CD8-positive, alpha-beta T cell (primary cell): ENCODE measurements at regions of chr12 and their contacts with region 1.

Region 1: DNA sequence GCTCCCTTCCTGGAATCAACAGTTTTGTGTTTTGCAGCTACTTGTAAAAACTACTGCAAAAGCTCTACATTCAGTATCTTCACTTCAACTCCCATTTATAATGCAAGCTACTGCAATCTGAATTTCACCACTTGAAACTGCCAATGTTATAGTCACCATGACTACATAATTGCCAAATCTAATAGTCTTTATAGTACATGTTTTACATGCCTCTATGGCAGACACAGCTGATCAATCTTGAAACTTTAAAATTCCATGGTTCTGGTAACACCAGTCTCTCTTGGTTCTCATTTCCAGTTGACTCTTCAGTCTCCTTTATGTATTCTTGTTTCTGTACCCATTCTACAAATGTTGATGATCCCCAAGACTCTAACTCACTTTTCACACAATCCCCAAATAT is 185.9 kb downstream of the MED13L start:
- DNase-seq: no peak
- ATAC-seq: no peak
- H3K4me3 ChIP-seq: no peak overlapping the region
- H3K4me3 Mint-ChIP-seq: no peak overlapping the region
- H3K27ac ChIP-seq: no peak overlapping the region
- H3K27ac Mint-ChIP-seq: peak overlapping the region; percentile 5
- H3K4me1 ChIP-seq: peaks cover 9% of the 10 kb centered on the region
- H3K4me1 Mint-ChIP-seq: peaks cover 49% of the 10 kb centered on the region
- H3K27me3 ChIP-seq: no peaks in the 10 kb centered on the region
- H3K27me3 Mint-ChIP-seq: no peaks in the 10 kb centered on the region
- CTCF ChIP-seq: no peak

Region 2: DNA sequence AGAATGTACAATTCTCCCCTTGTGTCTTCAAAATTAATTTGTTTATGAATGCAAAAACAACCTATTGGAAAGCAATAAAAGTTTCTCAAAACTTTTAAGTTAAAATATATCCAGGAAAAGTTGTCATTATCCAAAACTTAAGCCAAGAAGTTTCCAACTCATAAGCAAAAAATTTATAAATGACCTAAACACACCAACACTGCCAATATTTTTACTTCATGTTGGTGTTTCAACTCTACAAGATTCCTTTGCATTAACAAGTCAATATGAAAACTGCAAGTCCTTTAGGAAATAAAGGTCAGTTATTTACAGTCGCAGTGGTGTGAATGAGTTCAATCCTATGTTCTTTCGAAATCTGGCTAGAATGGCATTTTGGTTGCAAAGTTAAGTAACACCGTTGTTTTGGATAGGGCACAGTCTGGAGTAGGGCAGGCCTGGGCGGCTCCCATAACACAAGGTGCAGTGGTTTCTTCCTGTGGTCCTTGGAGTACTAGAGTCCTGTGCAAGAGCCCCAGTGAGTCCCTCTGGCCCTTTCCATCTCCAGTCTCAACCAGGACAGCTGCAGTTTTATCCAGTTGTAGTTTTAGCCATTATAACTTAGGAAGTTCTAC is 34.5 kb after region 1 on chr12:
- CTCF ChIA-PET with region 1: no interaction called
- POLR2A ChIA-PET with region 1: no interaction called
- intact Hi-C with region 1: loop called in 1 of 2 experiments (anchors 5 kb)
- DNase-seq: no peak
- ATAC-seq: no peak
- H3K4me3 ChIP-seq: no peak overlapping the region
- H3K4me3 Mint-ChIP-seq: no peak overlapping the region
- H3K27ac ChIP-seq: no peak overlapping the region
- H3K27ac Mint-ChIP-seq: no peak overlapping the region
- H3K4me1 ChIP-seq: peaks cover 39% of the 10 kb centered on the region
- H3K4me1 Mint-ChIP-seq: peaks cover 80% of the 10 kb centered on the region
- H3K27me3 ChIP-seq: no peaks in the 10 kb centered on the region
- H3K27me3 Mint-ChIP-seq: no peaks in the 10 kb centered on the region
- CTCF ChIP-seq: no peak